Vagina (tissue), 2 donors: ENCODE measurements at regions of chr5 and their contacts with region 1.

Region 1: DNA sequence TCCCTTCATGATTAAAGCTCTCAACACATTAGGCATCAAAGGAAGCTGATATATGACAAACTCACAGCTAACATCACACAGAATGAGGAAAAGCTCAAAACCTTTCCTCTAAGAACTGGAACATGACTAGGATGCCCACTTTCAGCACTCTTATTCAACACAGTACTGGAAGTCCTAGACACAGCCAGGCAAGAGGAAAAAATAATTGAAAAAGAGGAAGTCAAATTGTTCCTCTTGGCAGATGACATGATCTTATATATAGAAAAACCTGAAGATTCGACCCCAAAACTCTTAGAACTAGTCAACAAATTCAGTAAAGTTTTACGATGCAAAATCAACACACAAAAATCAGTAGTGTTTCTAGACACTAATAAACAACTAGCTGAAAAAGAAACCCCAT is 144.3 kb upstream of the NREP start:
- DNase-seq: no peak
- H3K4me3 ChIP-seq: no peak overlapping the region
- H3K27ac ChIP-seq: no peak overlapping the region
- H3K4me1 ChIP-seq: no peaks in the 10 kb centered on the region
- H3K27me3 ChIP-seq: no peaks in the 10 kb centered on the region
- CTCF ChIP-seq: no peak
- POLR2A ChIP-seq: no peak

Region 2: GRCh38 chr5:110996742-110997141 is 904.6 kb before region 1 on chr5:
- intact Hi-C with region 1: loop called (anchors 5 kb)
- DNase-seq: no peak
- H3K4me3 ChIP-seq: no peak overlapping the region
- H3K27ac ChIP-seq: no peak overlapping the region
- H3K4me1 ChIP-seq: no peaks in the 10 kb centered on the region
- H3K27me3 ChIP-seq: no peaks in the 10 kb centered on the region
- CTCF ChIP-seq: no peak
- POLR2A ChIP-seq: no peak